ENCODE measurements at regions of chr3 and their contacts with region 1.

Region 1: GRCh38 chr3:185659942-185660921 is 74.1 kb downstream of the SENP2 start:
- H3K4me3 ChIP-seq: no peak overlapping the region
- H3K27ac ChIP-seq: no peak overlapping the region
- H3K4me1 ChIP-seq: no peaks in the 10 kb centered on the region
- CTCF ChIP-seq: peak; percentile 60; the same call in 1 of the 2 replicates

Region 2: DNA sequence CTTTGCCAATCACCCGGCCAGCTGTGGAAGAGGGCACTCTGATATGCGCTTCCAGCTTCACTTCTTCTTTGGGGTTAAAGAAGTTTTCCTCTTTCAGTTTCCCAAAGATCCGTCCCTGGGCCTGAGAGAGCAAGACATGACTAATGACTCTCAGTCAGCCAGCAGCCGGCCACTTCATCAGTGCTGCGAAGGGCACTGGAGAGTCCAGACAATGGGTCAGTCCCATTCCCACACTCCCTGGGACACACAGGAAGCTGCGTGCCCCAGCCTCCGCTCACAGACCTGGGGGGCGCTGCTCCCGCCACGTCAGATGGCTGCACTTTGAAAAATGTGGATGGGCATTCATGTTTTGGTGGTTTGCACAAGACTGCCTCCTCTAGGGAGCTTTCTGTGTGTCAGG is 10.8 kb before region 1 on chr3:
- CTCF ChIA-PET with region 1: interaction called, 15 read pairs
- POLR2A ChIA-PET with region 1: no interaction called
- H3K4me3 ChIP-seq: no peak overlapping the region
- H3K27ac ChIP-seq: no peak overlapping the region
- H3K4me1 ChIP-seq: no peaks in the 10 kb centered on the region
- CTCF ChIP-seq: no peak

Region 3: GRCh38 chr3:185693985-185694653 is 33.9 kb after region 1 on chr3:
- CTCF ChIA-PET with region 1: interaction called, 11 read pairs
- POLR2A ChIA-PET with region 1: no interaction called
- H3K4me3 ChIP-seq: no peak overlapping the region
- H3K27ac ChIP-seq: no peak overlapping the region
- H3K4me1 ChIP-seq: peaks cover 5% of the 10 kb centered on the region; the same call in 1 of the 2 replicates
- CTCF ChIP-seq: no peak

Region 4: GRCh38 chr3:185764163-185764979 is 104.1 kb after region 1 on chr3:
- CTCF ChIA-PET with region 1: interaction called, 12 read pairs
- POLR2A ChIA-PET with region 1: no interaction called
- H3K4me3 ChIP-seq: no peak overlapping the region
- H3K27ac ChIP-seq: no peak overlapping the region
- H3K4me1 ChIP-seq: peaks cover 22% of the 10 kb centered on the region
- CTCF ChIP-seq: no peak

Region 5: GRCh38 chr3:185912929-185913901 is 253.0 kb after region 1 on chr3:
- CTCF ChIA-PET with region 1: interaction called, 10 read pairs
- POLR2A ChIA-PET with region 1: no interaction called
- H3K4me3 ChIP-seq: no peak overlapping the region
- H3K27ac ChIP-seq: no peak overlapping the region
- H3K4me1 ChIP-seq: no peaks in the 10 kb centered on the region
- CTCF ChIP-seq: no peak

Measured in HEK293 (cell line).